ENCODE measurements at regions of chr21 and their contacts with region 1.

Region 1: DNA sequence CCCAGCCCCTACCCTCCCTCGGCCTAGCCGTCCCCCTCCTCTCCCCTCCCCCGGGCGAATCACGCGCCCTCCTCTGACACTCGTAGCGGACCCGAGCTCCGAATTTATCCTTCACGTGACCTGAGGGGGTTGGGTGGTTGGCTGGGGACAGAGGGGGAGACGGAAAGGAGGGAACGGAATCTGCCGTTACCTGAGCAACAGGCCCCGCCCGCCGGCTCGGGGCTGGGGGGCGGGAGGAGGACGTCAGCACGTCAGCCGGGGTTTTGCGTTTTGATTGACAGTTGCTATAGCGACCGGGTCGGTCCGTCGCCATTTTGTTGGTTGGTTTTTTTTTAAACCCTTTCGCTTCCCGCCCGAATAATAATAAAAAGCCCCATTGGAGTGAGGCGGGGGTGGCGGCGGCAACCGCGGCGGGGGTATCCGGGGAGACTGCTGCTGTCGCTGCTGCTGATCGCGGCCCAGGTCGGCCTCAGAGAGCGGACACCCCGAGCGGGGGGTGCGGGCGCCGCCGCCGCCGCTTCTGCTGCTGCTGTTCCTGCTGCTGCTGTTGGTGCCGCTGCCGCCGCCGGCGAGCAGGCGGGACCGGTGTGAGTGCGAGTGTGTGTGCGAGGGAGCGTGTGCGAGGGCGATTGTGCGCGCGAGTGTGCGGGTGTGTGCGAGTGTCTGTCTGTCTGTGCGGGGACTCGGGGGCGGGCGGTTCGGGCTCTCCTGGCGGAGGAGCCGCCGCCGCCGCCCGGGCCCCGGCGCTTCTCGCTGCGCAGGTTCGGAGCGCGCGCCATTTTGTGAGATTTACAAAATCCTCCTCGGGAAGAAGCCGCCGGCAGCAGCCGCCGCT is at the start of gene DYRK1A:
- DNase-seq: peak; percentile 96 to 100 (median 98)

Region 2: DNA sequence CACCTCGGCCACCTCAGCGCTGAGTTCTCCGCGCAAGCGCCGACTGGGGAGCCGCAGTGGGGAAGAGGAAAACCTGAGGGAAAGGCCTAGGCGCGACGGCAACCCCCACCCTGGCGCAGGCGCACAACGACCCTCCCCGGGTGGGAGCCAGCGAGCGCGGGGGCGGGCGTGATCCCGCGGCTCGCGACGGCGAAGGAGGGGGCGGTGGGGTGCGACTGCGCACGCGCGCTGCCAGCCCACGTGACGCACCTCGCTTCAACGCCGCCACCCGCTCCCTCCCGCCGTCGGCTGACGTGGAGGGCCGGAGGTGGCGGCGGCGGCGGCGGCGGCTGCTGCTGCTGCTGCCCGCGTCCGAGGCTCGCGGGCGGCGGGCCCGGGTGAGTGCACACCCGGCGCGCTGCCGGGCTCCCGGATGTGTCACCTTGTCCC is 293.7 kb before region 1 on chr21 and contains the starts of genes PIGP and TTC3:
- intact Hi-C with region 1: loop called (anchors 10 kb)
- DNase-seq: peak; percentile 91 to 99 (median 95)

Region 3: DNA sequence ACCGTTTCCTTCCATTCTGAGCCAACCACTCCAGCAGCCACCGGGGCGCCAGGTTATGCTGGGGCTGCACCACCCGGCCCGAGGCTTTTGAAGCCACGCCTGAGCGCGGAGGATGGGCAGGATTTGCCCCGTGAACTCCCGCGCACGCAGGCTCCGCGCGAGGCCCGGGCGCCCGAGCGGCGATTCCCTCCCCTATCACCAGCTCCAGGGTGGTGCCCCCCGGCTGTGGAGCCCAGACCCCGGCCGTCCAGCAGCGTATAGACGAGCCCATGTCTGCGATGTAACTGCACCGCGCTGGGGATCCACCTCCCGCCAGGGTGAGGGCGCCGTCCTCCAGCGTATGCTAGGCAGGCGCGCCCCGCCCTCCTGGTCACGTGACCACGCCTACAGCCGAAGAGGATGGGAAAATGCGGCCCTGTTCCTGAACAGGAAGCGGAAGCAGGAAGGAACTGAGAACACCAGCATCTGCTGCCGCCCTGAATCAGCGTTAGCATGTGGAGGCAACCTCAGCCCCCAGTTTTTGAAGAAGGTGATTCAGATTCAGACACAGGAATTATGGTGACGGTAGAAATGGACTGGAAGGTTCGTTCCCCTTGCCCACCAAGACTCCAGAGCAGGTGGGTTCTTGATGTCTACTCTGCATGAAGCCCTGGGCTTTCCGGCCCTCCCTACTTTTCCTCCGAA is 145.6 kb before region 1 on chr21:
- intact Hi-C with region 1: loop called (anchors 2 kb)
- DNase-seq: peak; percentile 83 to 99 (median 95)

Region 4: GRCh38 chr21:37267269-37268184 is 99.2 kb before region 1 on chr21 and contains the start of gene VPS26C:
- intact Hi-C with region 1: loop called (anchors 1 kb)
- DNase-seq: peak; percentile 93 to 100 (median 98)

Region 5: DNA sequence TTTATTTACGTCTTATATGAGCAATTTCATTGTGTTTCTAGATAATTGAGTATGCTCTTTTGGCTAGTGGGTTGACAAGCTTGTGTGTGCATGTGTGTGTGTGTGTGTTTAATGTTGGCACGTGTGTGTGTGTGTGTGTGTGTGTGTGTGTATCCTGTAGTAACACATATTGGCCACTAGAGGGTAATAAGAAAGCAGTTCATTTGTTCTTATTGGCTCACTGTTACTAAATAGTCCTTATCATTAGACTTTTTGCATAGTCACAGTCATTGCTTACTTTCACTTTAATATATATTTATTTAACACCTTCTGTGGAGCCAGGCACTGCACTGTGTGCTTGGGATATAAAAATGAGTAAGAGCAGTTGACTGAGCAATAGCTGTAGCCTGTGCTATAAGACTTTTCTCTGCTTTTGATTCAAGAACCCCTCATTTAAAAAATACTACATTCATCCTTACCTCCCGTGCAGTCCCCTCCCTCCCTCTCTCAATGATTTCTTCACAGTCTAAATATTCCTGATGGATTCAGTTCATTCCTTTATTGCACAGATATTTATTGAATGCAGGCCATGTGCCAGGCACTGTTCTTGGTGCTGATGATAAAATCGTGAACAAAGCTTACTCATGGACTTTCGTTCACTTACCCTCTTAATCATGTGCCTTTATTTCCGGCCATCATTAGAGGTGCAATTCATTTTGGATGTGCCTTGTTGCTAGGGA is 96.5 kb after region 1 on chr21:
- intact Hi-C with region 1: loop called (anchors 5 kb)
- DNase-seq: no peak

Region 6: DNA sequence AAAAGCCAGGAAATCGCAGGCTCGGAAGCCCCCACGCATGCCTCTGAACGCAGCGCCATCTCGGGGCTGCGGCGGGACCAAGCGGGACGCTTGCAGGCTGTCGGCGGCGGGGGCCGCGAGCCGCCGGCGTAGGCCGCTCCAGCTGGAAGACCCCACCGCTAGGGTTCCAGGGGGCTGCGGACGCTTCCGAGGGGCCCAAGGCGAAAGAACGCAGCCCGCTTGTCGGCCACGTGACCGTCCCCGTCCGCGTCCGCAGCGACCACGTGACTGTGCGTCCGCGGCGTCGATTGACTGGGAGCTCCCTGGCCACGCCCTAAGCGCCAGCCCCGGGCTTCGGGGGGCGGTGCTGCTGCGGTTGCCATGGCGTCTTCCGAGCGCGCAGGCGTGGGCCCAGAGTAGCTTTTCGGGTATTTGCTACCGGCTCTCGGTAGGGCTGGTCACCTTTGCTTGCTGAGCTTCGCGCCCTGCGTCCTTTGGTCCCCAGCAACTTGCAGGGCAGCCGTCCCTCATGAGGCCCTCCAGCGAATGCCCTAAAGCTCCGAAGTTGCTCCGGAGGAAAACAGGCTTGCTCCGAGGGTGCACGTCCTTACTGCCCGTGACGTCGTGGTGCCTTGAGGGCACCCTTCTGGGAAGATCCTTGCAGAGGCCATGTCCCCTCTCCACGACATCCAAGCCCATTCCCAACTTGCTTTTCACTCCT is 197.1 kb after region 1 on chr21:
- intact Hi-C with region 1: loop called (anchors 5 kb)
- DNase-seq: peak; percentile 86 to 99 (median 96)

Measured in posterior cingulate gyrus (tissue), 11 donors.